Lower leg skin (tissue), 4 donors: ENCODE measurements at regions of chr17 and their contacts with region 1.

Region 1: DNA sequence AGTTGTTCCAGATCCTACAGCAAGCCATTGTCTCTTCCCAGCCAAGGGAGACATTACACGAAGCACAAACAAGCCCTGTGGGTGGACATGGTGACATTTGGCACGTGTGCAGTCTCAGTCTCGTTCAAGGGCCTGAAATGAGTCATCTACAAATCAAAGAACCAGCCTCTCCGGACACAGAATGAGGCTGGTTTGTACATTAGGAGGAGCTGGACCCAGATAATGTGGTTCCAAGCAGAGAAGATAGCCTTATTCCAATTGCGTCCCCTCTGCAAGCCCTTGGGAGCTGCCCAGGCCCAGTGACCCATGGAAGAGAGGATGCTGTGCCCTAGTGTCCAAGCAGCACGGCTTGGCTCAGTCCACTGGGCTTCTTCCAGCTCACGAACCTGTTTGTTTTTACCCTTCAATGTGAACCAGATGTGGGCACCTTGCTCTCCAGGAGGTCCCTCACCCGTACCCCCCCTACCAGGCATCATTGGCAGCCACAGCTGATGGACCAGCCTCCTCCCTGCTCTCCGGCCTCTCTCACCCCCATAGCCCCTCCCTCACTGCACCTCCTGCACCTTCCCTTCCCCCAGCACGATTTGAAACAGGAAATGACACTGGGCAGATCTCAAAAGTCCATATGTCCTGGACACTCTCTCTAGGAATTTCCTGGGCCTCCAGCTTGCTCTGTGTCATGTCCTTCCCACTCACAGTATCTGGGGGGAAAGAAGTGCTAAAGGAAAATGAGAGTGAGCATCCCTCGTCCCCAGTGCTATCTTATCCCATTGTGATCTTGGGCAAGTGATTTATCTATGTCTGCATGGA is 26.2 kb downstream of the KPNA2 start:
- DNase-seq: peak in 1 of 2 donors; percentile 37
- H3K4me3 ChIP-seq: no peak overlapping the region
- CTCF ChIP-seq: no peak
- POLR2A ChIP-seq: no peak

Region 2: DNA sequence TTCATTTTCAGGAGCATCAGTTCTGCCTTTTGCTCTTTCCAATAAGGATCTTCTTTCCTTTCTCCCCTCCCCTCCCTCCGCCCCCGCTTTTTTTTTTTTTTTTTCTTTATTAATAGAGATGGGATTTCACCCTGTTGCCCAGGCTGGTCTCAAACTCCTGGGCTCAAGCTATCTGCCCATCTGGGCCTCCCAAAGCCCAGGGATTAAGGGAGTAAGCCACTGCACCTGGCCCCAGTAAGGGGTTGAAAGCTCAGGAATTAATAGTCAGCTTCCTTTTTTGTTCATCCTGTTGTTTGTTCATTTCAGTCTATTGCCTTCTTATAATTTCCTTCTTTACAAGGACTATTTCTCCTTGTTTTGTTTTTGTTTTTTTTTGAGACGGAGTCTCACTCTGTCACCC is 57.5 kb before region 1 on chr17:
- intact Hi-C with region 1: loop called (anchors 2 kb)
- DNase-seq: no peak
- H3K4me3 ChIP-seq: no peak overlapping the region
- CTCF ChIP-seq: no peak
- POLR2A ChIP-seq: no peak

Region 3: GRCh38 chr17:68205251-68205807 is 143.6 kb after region 1 on chr17:
- intact Hi-C with region 1: no loop called
- DNase-seq: peak; percentile 91 to 98
- H3K4me3 ChIP-seq: peak overlapping the region; percentile 76
- CTCF ChIP-seq: peak in 2 of 3 donors; percentile 8 to 34
- POLR2A ChIP-seq: peak in 1 of 2 donors; percentile 46

Region 4: GRCh38 chr17:68273722-68274121 is 212.0 kb after region 1 on chr17:
- intact Hi-C with region 1: no loop called
- DNase-seq: no peak
- H3K4me3 ChIP-seq: no peak overlapping the region
- CTCF ChIP-seq: no peak
- POLR2A ChIP-seq: no peak